Naive thymus-derived CD4-positive, alpha-beta T cell (primary cell): ENCODE measurements at regions of chr15 and their contacts with region 1.

Region 1: DNA sequence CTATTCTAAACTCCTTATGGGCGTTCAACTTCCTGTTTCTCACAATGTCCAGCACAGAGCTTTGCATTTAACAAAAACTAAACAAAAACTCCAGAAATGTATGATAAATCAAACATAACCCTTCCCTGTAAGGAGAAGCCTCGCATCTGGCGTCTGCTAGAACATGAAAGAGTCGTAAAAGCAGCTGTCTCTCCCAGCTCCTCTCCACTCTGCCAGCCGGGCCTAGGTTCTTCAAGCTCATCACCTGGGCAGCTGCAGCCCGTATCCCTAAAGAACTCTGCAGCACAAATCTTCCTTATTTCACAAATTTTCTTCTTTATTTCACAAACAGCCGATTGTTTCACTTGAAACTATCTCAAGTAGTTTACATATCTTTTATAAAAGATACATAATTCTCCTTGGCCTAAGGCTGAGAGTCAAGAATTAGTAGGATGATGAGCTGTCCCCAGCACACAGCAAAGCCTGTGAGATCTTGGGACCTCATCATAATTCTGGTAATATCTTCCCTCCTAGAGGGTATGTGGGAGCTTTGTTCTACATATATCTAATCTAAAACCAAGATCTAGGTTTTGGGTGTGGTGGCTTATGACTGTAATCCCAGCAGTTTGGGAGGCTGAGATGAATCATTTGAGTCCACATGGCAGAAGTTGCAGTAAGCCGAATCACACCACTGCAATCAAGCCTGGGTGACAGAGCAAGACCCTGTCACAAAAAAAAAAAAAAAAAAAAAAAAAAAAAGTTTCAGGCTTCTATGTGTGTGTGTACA is 35.3 kb downstream of the ANXA2 start:
- DNase-seq: peak in 1 of 9 donors; percentile 46
- ATAC-seq: peak; percentile 31
- H3K4me3 ChIP-seq: no peak overlapping the region
- H3K4me3 Mint-ChIP-seq: peak overlapping the region in 1 of 10 donors; percentile 54
- H3K27ac ChIP-seq: no peak overlapping the region
- H3K27ac Mint-ChIP-seq: peak overlapping the region in 3 of 9 donors; percentile 47 to 81 (median 78)
- H3K4me1 ChIP-seq: peaks cover 0 to 7% of the 10 kb centered on the region in 2 donors
- H3K4me1 Mint-ChIP-seq: peaks cover 6 to 39% (median 12%) of the 10 kb centered on the region in 7 donors
- H3K27me3 ChIP-seq: no peaks in the 10 kb centered on the region
- H3K27me3 Mint-ChIP-seq: no peaks in the 10 kb centered on the region

Region 2: DNA sequence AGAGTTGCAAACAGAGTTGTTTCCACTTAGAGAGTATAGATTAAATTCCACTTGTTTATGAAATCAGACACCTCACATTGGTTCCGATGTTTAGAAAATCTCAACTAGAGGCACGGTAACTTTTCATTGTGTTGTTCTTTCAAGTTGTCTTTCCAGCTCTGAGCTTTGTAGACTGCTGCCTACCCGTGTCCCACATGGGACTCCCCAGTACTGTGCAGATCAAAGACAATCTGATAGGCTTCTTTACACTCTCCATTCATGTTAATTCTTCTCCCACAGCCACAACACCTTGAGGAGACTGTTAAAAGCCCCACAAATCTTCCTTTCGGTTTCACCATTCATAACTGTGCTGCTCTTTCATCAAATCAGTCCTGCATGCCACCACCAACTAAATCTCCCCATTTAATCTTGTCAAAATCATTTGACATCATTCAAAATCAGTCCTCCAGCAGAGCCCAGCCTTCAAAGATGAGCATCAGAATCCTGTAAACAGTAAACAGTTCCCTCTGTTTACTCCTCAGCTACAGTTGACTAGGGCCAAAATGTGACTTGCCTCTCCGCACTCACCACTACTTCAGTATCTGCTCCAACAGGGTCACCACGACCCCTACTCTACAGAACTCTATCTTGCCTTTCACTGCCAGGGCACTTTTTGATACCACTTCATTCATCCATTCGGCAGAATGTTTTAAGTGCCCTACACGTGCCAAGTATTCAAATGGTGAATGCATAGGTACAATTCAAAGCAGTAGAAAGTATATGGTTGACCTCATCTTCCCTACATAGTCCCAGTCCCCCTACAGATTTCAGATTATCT is 27.0 kb after region 1 on chr15:
- CTCF ChIA-PET with region 1: no interaction called
- POLR2A ChIA-PET with region 1: no interaction called
- intact Hi-C with region 1: loop called in 1 of 2 experiments (anchors 2 kb)
- DNase-seq: peak in 8 of 9 donors; percentile 7 to 58 (median 34)
- ATAC-seq: peak; percentile 88
- H3K4me3 ChIP-seq: peak overlapping the region; percentile 15
- H3K4me3 Mint-ChIP-seq: peak overlapping the region; percentile 17 to 72 (median 66)
- H3K27ac ChIP-seq: no peak overlapping the region
- H3K27ac Mint-ChIP-seq: peak overlapping the region in 4 of 9 donors; percentile 4 to 74 (median 10)
- H3K4me1 ChIP-seq: peaks cover 3 to 32% of the 10 kb centered on the region in 2 donors
- H3K4me1 Mint-ChIP-seq: peaks cover 7 to 68% (median 20%) of the 10 kb centered on the region in 7 donors
- H3K27me3 ChIP-seq: no peaks in the 10 kb centered on the region
- H3K27me3 Mint-ChIP-seq: no peaks in the 10 kb centered on the region

Region 3: GRCh38 chr15:60397772-60398445 is 35.4 kb after region 1 on chr15 and contains the start of gene ANXA2:
- CTCF ChIA-PET with region 1: no interaction called
- POLR2A ChIA-PET with region 1: interaction called, 3 read pairs
- intact Hi-C with region 1: loop called (anchors 1 to 2 kb)
- DNase-seq: peak; percentile 49 to 85 (median 62)
- ATAC-seq: peak; percentile 81
- H3K4me3 ChIP-seq: peak within 1 kb of the TSS; percentile 72
- H3K4me3 Mint-ChIP-seq: peak within 1 kb of the TSS; percentile 83 to 98 (median 87)
- H3K27ac ChIP-seq: peak within 1 kb of the TSS; percentile 61
- H3K27ac Mint-ChIP-seq: peak within 1 kb of the TSS; percentile 87 to 98 (median 95)
- H3K4me1 ChIP-seq: peaks cover 6 to 32% of the 10 kb centered on the region in 2 donors
- H3K4me1 Mint-ChIP-seq: peaks cover 10 to 67% (median 33%) of the 10 kb centered on the region in 7 donors
- H3K27me3 ChIP-seq: no peaks in the 10 kb centered on the region
- H3K27me3 Mint-ChIP-seq: peaks cover 0 to 7% (median 0%) of the 10 kb centered on the region in 5 donors
- total RNA-seq, gene ANXA2: 28.8 to 377 (median 42.4) TPM

Region 4: DNA sequence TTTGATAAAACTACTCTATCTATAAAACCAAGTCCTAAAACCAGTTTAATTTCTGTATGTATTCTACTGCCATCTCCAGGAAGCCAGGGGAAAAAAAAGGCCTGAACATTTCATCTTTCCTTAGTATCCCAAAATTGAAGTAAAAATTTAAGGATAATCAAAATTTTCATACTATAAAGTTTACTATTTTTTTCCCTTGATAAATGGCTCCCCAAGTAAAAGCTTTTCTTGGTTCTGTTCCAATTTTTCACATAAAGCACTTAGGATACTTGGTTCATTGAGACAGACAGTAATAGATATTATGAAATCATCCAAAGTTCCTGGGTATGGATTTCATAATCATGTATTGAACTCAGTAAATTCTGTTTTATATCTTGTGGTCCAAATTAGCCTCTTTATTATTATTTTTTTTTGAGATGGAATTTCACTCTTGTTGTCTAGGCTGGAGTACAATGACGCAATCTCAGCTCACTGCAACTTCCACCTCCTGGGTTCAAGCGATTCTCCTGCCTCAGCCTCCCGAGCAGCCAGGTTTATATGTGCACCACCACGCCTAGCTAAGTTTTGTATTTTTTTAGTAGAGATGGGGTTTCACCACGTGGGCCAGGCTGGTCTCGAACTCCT is 81.9 kb after region 1 on chr15:
- CTCF ChIA-PET with region 1: interaction called, 27 read pairs
- POLR2A ChIA-PET with region 1: no interaction called
- intact Hi-C with region 1: loop called (anchors 1 kb)
- DNase-seq: no peak
- ATAC-seq: no peak
- H3K4me3 ChIP-seq: no peak overlapping the region
- H3K4me3 Mint-ChIP-seq: no peak overlapping the region
- H3K27ac ChIP-seq: no peak overlapping the region
- H3K27ac Mint-ChIP-seq: no peak overlapping the region
- H3K4me1 ChIP-seq: no peaks in the 10 kb centered on the region
- H3K4me1 Mint-ChIP-seq: peaks cover 0 to 9% (median 4%) of the 10 kb centered on the region in 7 donors
- H3K27me3 ChIP-seq: no peaks in the 10 kb centered on the region
- H3K27me3 Mint-ChIP-seq: no peaks in the 10 kb centered on the region

Region 5: GRCh38 chr15:60580650-60581376 is 218.3 kb after region 1 on chr15:
- CTCF ChIA-PET with region 1: interaction called, 3 read pairs
- POLR2A ChIA-PET with region 1: no interaction called
- intact Hi-C with region 1: loop called in 1 of 2 experiments (anchors 2 kb)
- DNase-seq: peak in 7 of 9 donors; percentile 72 to 90 (median 86)
- ATAC-seq: peak; percentile 91
- H3K4me3 ChIP-seq: peak overlapping the region; percentile 33
- H3K4me3 Mint-ChIP-seq: peak overlapping the region; percentile 72 to 88 (median 85)
- H3K27ac ChIP-seq: peak overlapping the region; percentile 82
- H3K27ac Mint-ChIP-seq: peak overlapping the region; percentile 90 to 98 (median 96)
- H3K4me1 ChIP-seq: peaks cover 78 to 80% of the 10 kb centered on the region in 2 donors
- H3K4me1 Mint-ChIP-seq: peaks cover 58 to 99% (median 91%) of the 10 kb centered on the region in 7 donors
- H3K27me3 ChIP-seq: no peaks in the 10 kb centered on the region
- H3K27me3 Mint-ChIP-seq: no peaks in the 10 kb centered on the region

Region 6: GRCh38 chr15:60865507-60865906 is 503.0 kb after region 1 on chr15:
- CTCF ChIA-PET with region 1: no interaction called
- POLR2A ChIA-PET with region 1: no interaction called
- intact Hi-C with region 1: loop called in 1 of 2 experiments (anchors 2 kb)
- DNase-seq: no peak
- ATAC-seq: no peak
- H3K4me3 ChIP-seq: no peak overlapping the region
- H3K4me3 Mint-ChIP-seq: no peak overlapping the region
- H3K27ac ChIP-seq: no peak overlapping the region
- H3K27ac Mint-ChIP-seq: peak overlapping the region in 1 of 9 donors; percentile 46
- H3K4me1 ChIP-seq: peaks cover 3 to 6% of the 10 kb centered on the region in 2 donors
- H3K4me1 Mint-ChIP-seq: peaks cover 2 to 22% (median 16%) of the 10 kb centered on the region in 7 donors
- H3K27me3 ChIP-seq: no peaks in the 10 kb centered on the region
- H3K27me3 Mint-ChIP-seq: peaks cover 0 to 8% (median 0%) of the 10 kb centered on the region in 5 donors

Region 7: GRCh38 chr15:60932051-60932915 is 569.8 kb after region 1 on chr15:
- CTCF ChIA-PET with region 1: interaction called, 4 read pairs
- POLR2A ChIA-PET with region 1: no interaction called
- intact Hi-C with region 1: loop called in 1 of 2 experiments (anchors 5 kb)
- DNase-seq: peak in 5 of 9 donors; percentile 1 to 32 (median 10)
- ATAC-seq: peak; percentile 81
- H3K4me3 ChIP-seq: no peak overlapping the region
- H3K4me3 Mint-ChIP-seq: no peak overlapping the region
- H3K27ac ChIP-seq: no peak overlapping the region
- H3K27ac Mint-ChIP-seq: no peak overlapping the region
- H3K4me1 ChIP-seq: no peaks in the 10 kb centered on the region
- H3K4me1 Mint-ChIP-seq: peaks cover 0 to 8% (median 0%) of the 10 kb centered on the region in 7 donors
- H3K27me3 ChIP-seq: no peaks in the 10 kb centered on the region
- H3K27me3 Mint-ChIP-seq: peaks cover 0 to 30% (median 6%) of the 10 kb centered on the region in 5 donors